Activated CD4-positive, alpha-beta T cell treated with anti-CD3 and anti-CD28 coated beads for 36 hours (primary cell): ENCODE measurements at regions of chr11 and their contacts with region 1.

Region 1: DNA sequence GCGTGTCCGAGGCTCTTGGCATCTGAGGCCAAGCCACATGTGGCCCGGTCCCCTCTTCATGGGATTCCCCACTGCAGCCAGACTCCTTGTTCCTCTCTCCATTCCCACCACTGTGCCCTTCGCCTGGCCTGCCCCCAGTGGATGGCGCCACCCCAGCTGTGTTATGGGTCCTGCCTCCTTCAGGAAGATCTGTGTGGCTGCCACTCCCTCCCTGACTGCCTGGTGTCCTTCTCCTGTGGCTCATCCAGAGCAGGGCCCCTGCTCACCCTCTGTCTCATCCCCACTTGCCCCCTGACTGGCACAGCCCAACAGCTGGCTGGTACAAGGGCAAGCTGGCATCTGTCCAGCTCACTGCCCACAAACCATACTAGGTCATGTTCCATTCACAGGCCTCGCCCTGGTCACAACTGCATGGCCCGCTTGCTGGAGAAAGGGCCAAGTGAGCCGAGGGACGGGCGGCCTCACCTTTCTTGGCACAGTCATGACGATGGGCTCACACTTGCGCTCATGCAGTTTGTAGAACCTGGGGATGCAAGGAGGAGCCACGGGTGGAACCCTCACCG is 1.9 kb upstream of the PTPRCAP start:
- DNase-seq: peak; percentile 77
- ATAC-seq: peak; percentile 2
- H3K4me3 Mint-ChIP-seq: peak overlapping the region; percentile 84
- H3K27ac Mint-ChIP-seq: peak overlapping the region; percentile 97
- H3K4me1 Mint-ChIP-seq: peaks cover 49% of the 10 kb centered on the region
- H3K27me3 Mint-ChIP-seq: no peaks in the 10 kb centered on the region

Region 2: GRCh38 chr11:67409261-67409666 is 30.1 kb before region 1 on chr11:
- CTCF ChIA-PET with region 1: interaction called, 3 read pairs
- POLR2A ChIA-PET with region 1: interaction called, 4 read pairs
- intact Hi-C with region 1: loop called in 1 of 2 experiments (anchors 2 kb)
- DNase-seq: peak; percentile 84
- ATAC-seq: peak; percentile 62
- H3K4me3 Mint-ChIP-seq: peak overlapping the region; percentile 85
- H3K27ac Mint-ChIP-seq: peak overlapping the region; percentile 87
- H3K4me1 Mint-ChIP-seq: peaks cover 74% of the 10 kb centered on the region
- H3K27me3 Mint-ChIP-seq: no peaks in the 10 kb centered on the region

Region 3: GRCh38 chr11:67482825-67483798 is 43.7 kb after region 1 on chr11 and contains the start of gene AIP:
- CTCF ChIA-PET with region 1: no interaction called
- POLR2A ChIA-PET with region 1: interaction called, 6 read pairs
- intact Hi-C with region 1: loop called (anchors 1 to 2 kb)
- DNase-seq: peak; percentile 99
- ATAC-seq: peak; percentile 72
- H3K4me3 Mint-ChIP-seq: peak within 1 kb of the TSS; percentile 86
- H3K27ac Mint-ChIP-seq: peak within 1 kb of the TSS; percentile 99
- H3K4me1 Mint-ChIP-seq: peaks cover 50% of the 10 kb centered on the region
- H3K27me3 Mint-ChIP-seq: no peaks in the 10 kb centered on the region
- total RNA-seq, gene AIP: 142 to 144 TPM